CD4-positive, alpha-beta memory T cell (primary cell): ENCODE measurements at regions of chr12 and their contacts with region 1.

Region 1: DNA sequence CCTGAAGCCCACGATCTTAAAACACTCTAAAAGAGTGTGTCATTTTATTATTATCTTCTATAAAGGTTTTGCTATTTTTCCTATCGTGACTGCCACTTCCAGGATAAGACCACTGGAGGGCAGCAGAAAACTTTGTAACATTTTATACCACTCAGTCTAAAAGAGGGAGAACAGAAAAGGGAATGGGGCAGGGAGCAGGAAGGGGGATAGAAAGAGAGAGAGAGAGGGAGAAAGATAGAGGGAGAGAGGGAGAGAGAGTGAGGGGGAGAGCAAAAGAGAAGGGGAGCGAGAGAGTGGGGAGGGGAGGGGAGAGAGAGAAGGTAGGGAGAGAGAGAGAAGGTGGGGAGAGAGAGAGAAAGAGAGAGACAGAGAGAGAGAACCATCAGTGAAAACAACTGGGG is 2.0 kb upstream of the ART4 start:
- DNase-seq: peak in 4 of 5 donors; percentile 50 to 59 (median 56)
- H3K4me3 ChIP-seq: no peak overlapping the region
- H3K4me3 Mint-ChIP-seq: peak overlapping the region in 1 of 8 donors; percentile 11
- H3K27ac ChIP-seq: no peak overlapping the region
- H3K27ac Mint-ChIP-seq: no peak overlapping the region
- H3K4me1 ChIP-seq: peaks cover 3% of the 10 kb centered on the region
- H3K4me1 Mint-ChIP-seq: peaks cover 0 to 5% (median 1%) of the 10 kb centered on the region in 4 donors
- H3K27me3 ChIP-seq: no peaks in the 10 kb centered on the region
- H3K27me3 Mint-ChIP-seq: no peaks in the 10 kb centered on the region

Region 2: DNA sequence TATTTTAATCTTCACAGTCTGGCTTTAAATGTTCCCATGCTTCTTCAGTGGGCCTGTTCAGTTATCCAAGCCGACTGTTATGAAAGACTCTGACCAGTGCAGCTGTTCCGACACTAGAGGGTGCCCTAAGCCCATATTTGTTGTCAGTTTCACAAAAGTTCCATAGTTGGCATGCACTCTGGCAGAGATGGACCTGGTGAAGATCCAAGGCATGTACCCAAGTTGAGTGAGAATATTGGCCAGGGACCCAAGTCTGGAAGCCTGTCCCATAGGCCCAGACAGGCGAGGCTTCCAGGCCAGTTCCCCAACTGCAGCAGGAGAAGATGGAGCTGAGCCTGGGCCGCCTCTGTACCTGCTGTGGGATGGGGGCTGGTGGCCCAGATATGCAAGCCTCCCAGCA is 121.6 kb before region 1 on chr12:
- CTCF ChIA-PET with region 1: interaction called, 13 read pairs
- POLR2A ChIA-PET with region 1: no interaction called
- intact Hi-C with region 1: loop called (anchors 1 kb)
- DNase-seq: peak; percentile 49 to 66 (median 62)
- H3K4me3 ChIP-seq: no peak overlapping the region
- H3K4me3 Mint-ChIP-seq: no peak overlapping the region
- H3K27ac ChIP-seq: no peak overlapping the region
- H3K27ac Mint-ChIP-seq: peak overlapping the region in 1 of 7 donors; percentile 15
- H3K4me1 ChIP-seq: no peaks in the 10 kb centered on the region
- H3K4me1 Mint-ChIP-seq: peaks cover 0 to 3% (median 1%) of the 10 kb centered on the region in 4 donors
- H3K27me3 ChIP-seq: no peaks in the 10 kb centered on the region
- H3K27me3 Mint-ChIP-seq: peaks cover 5 to 6% of the 10 kb centered on the region in 2 donors

Region 3: DNA sequence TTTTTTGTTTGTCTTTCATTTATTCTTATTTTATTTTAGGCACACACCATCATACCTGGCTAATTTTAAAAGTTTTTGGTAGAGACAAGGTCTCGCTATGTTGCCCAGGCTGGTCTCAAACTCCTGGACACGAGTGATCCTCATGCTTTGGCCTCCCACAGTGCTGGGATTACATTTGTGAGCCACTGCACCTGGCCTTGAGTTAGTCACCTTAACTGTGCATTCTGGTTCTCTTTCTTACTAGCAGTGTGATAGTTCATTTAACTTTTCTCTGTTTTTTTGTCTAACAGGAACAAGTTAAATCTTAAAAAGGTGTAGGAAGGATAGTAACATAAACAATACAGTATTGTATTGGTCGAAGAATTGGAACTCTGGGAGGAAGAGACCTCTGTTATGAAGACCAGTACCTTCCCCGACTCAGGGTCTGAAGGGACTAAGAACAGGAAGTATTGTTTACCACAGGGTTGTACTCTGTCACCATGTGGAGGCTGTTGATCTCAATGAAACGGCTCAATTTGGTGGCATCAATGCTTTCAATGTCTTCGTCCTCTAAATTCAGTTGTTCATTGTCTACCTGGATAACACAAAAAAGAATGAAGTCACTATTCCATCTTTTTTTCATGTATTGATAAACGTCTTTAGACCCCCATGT is 75.3 kb after region 1 on chr12:
- CTCF ChIA-PET with region 1: interaction called, 7 read pairs
- POLR2A ChIA-PET with region 1: no interaction called
- intact Hi-C with region 1: loop called (anchors 5 kb)
- DNase-seq: no peak
- H3K4me3 ChIP-seq: no peak overlapping the region
- H3K4me3 Mint-ChIP-seq: peak overlapping the region in 1 of 8 donors; percentile 27
- H3K27ac ChIP-seq: no peak overlapping the region
- H3K27ac Mint-ChIP-seq: peak overlapping the region; percentile 19 to 80 (median 78)
- H3K4me1 ChIP-seq: peaks cover 15% of the 10 kb centered on the region
- H3K4me1 Mint-ChIP-seq: peaks cover 11 to 34% (median 16%) of the 10 kb centered on the region in 4 donors
- H3K27me3 ChIP-seq: no peaks in the 10 kb centered on the region
- H3K27me3 Mint-ChIP-seq: no peaks in the 10 kb centered on the region

Region 4: GRCh38 chr12:15001733-15002382 is 156.5 kb after region 1 on chr12:
- CTCF ChIA-PET with region 1: interaction called, 191 read pairs
- POLR2A ChIA-PET with region 1: no interaction called
- intact Hi-C with region 1: no loop called
- DNase-seq: no peak
- H3K4me3 ChIP-seq: no peak overlapping the region
- H3K4me3 Mint-ChIP-seq: no peak overlapping the region
- H3K27ac ChIP-seq: no peak overlapping the region
- H3K27ac Mint-ChIP-seq: peak overlapping the region in 1 of 7 donors; percentile 18
- H3K4me1 ChIP-seq: no peaks in the 10 kb centered on the region
- H3K4me1 Mint-ChIP-seq: no peaks in the 10 kb centered on the region
- H3K27me3 ChIP-seq: peaks cover 9% of the 10 kb centered on the region
- H3K27me3 Mint-ChIP-seq: peaks cover 21 to 31% of the 10 kb centered on the region in 2 donors

Region 5: DNA sequence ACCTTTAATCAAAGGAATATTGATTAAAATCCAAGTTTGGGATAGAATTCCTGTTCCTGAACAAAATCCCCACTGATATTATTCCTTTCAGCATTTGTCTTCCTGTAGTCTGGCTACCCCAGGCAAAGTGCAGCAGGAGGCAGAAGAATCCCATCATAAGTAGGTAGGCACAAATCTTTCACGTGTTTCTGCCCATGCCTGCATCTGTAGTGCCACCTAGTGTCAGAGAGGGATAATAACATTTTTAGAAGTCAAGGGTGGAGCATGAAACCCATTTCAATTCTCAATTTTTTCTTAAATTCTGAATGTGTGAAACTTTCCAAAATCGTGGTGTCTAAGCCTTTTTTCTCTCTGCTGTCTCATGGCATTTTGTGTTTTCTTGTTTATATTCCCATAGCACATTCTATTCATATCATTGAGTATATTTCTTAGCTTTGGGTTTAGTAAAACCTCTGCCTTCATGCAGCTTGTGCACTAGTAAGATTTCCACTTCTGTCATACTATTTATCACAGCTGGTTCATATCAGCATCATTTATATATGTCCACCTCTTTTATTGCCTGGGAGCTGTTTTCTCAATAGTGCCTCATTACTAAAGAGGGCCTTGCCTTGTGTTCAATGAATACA is 423.7 kb after region 1 on chr12:
- CTCF ChIA-PET with region 1: no interaction called
- POLR2A ChIA-PET with region 1: no interaction called
- intact Hi-C with region 1: loop called (anchors 1 kb)
- DNase-seq: peak in 4 of 5 donors; percentile 43 to 55 (median 48)
- H3K4me3 ChIP-seq: no peak overlapping the region
- H3K4me3 Mint-ChIP-seq: no peak overlapping the region
- H3K27ac ChIP-seq: no peak overlapping the region
- H3K27ac Mint-ChIP-seq: no peak overlapping the region
- H3K4me1 ChIP-seq: no peaks in the 10 kb centered on the region
- H3K4me1 Mint-ChIP-seq: no peaks in the 10 kb centered on the region
- H3K27me3 ChIP-seq: no peaks in the 10 kb centered on the region
- H3K27me3 Mint-ChIP-seq: peaks cover 3% of the 10 kb centered on the region in 2 donors